ENCODE measurements at regions of chr18 and their contacts with region 1.

Region 1: GRCh38 chr18:48639772-48640432 is 101.1 kb downstream of the CTIF start:
- DNase-seq: no peak
- H3K4me3 ChIP-seq: no peak overlapping the region
- H3K27ac ChIP-seq: no peak overlapping the region
- H3K4me1 ChIP-seq: no peaks in the 10 kb centered on the region
- H3K27me3 ChIP-seq: no peaks in the 10 kb centered on the region
- CTCF ChIP-seq: no peak
- POLR2A ChIP-seq: no peak

Region 2: DNA sequence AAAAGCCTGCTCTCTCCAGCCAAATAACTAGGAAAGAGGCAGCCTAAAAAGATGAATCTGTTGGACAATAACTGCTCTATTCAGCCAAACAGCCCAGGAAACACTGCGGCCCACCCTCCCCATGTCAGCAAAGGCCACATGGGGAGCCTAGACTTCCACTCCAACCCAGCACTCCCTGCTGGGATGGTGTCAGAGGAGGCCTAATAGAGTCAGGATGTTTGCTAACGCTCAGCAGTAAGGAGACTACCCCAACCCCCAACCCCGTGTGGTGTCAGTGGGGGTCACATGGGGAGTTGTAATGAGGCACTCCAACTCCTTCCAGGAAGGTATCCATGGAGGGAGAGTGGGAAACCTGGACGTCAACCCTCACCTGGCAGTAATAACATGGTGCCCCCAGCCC is 272.3 kb before region 1 on chr18:
- intact Hi-C with region 1: no loop called
- DNase-seq: peak; percentile 49 to 65
- H3K4me3 ChIP-seq: no peak overlapping the region
- H3K27ac ChIP-seq: no peak overlapping the region
- H3K4me1 ChIP-seq: no peaks in the 10 kb centered on the region
- H3K27me3 ChIP-seq: no peaks in the 10 kb centered on the region
- CTCF ChIP-seq: no peak
- POLR2A ChIP-seq: no peak

Region 3: DNA sequence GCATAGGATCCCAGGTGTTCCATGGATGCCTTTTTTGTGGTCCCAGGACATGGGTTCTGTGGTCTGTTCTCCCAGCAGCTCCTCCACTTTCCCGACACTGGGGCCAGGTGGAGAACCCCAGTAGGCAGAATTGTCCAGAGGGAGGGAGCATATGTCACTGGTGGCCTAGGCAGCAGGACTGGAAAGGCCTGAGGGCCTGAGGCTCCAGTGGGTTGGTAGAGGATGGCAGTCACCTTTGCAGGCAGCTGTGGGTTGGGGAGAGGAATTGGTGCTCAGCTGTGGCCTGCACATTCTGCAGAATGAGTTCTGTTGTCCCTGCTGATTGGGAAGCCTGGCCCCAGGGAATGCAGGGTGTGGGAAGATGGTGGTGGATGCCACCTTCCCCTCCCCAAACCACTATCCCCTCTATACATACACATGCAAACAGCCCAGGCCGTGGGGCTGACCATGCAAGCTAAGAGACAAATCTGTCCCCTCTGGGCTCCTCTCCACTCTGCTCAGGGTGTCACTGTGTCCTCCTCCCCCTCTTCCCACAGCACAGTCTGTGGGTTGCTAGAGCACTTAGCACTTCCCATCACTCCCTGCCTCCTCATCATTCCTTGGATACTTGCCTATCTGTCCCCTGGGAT is 89.7 kb before region 1 on chr18:
- intact Hi-C with region 1: loop called (anchors 10 kb)
- DNase-seq: no peak
- H3K4me3 ChIP-seq: no peak overlapping the region
- H3K27ac ChIP-seq: no peak overlapping the region
- H3K4me1 ChIP-seq: peaks cover 39% of the 10 kb centered on the region
- H3K27me3 ChIP-seq: no peaks in the 10 kb centered on the region
- CTCF ChIP-seq: no peak
- POLR2A ChIP-seq: no peak

Region 4: GRCh38 chr18:49500201-49500921 is 860.5 kb after region 1 on chr18:
- intact Hi-C with region 1: no loop called
- DNase-seq: no peak
- H3K4me3 ChIP-seq: no peak overlapping the region
- H3K27ac ChIP-seq: no peak overlapping the region
- H3K4me1 ChIP-seq: no peaks in the 10 kb centered on the region
- H3K27me3 ChIP-seq: no peaks in the 10 kb centered on the region
- CTCF ChIP-seq: no peak
- POLR2A ChIP-seq: no peak

Measured in vagina (tissue), 2 donors.